Endothelial cell of umbilical vein (primary cell): ENCODE measurements at regions of chr20 and their contacts with region 1.

Region 1: DNA sequence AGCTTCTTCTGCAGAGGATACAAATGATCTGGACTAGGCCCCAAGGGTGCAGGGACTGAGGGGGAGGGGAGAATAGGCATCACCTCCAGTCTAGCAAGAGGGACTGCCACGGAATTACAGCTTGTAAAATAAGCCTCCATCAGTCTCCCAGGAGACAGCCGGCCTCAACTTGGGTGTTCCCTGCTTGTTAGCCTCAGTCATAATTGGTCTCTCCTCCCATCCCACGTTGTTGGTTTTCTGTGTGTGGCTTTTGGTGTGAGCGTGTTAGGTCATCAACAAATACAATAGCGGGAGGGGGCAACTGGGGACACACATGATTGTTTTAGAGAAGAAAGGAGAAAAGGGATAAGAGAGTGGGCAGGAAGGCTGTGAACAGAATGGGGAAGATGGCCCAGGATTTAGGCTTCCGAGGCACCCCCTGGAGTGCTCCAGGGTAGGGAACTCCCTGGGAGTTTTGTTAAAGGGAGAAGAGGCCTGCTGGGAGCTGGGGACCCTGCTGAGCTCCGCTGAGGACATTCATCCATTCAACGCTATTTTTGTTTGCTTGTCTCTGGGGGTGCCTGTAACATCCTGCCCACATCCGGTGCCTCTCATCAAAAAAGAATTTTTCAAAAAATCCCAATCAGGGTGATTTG is 9.2 kb downstream of the FOXA2 start:
- DNase-seq: no peak
- H3K4me3 ChIP-seq: no peak overlapping the region
- H3K27ac ChIP-seq: no peak overlapping the region
- H3K4me1 ChIP-seq: no peaks in the 10 kb centered on the region
- H3K27me3 ChIP-seq: peaks cover 90 to 96% of the 10 kb centered on the region in 2 experiments
- CTCF ChIP-seq: no peak
- POLR2A ChIP-seq: no peak

Region 2: DNA sequence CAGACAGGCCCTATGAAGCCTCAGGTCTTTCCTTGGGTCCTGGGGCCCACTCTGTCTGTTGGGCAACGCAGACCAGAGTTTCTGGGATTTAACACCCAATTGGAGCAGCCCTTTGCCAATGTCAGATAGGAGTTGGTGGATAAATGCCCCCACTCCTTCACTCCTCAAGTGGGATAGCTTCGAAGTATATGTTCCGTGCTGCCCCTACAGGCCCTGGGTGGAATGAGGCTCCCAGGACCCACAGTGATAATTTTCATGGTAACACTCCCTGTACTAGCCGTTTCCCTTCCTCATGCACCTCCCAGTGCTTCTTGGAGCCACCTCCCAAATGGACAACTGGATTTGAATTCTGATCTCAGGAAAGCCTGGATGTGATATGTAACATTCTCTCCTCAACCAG is 136.3 kb before region 1 on chr20:
- CTCF ChIA-PET with region 1: no interaction called
- POLR2A ChIA-PET with region 1: no interaction called
- dilution Hi-C with region 1: no loop called
- intact Hi-C with region 1: no loop called
- DNase-seq: no peak
- H3K4me3 ChIP-seq: no peak overlapping the region
- H3K27ac ChIP-seq: no peak overlapping the region
- H3K4me1 ChIP-seq: no peaks in the 10 kb centered on the region
- H3K27me3 ChIP-seq: peaks cover 0 to 2% of the 10 kb centered on the region in 2 experiments
- CTCF ChIP-seq: no peak
- POLR2A ChIP-seq: no peak

Region 3: GRCh38 chr20:22499515-22500166 is 75.6 kb before region 1 on chr20:
- CTCF ChIA-PET with region 1: no interaction called
- POLR2A ChIA-PET with region 1: no interaction called
- dilution Hi-C with region 1: no loop called
- intact Hi-C with region 1: no loop called
- DNase-seq: no peak
- H3K4me3 ChIP-seq: no peak overlapping the region
- H3K27ac ChIP-seq: no peak overlapping the region
- H3K4me1 ChIP-seq: no peaks in the 10 kb centered on the region
- H3K27me3 ChIP-seq: no peaks in the 10 kb centered on the region
- CTCF ChIP-seq: no peak
- POLR2A ChIP-seq: no peak

Region 4: DNA sequence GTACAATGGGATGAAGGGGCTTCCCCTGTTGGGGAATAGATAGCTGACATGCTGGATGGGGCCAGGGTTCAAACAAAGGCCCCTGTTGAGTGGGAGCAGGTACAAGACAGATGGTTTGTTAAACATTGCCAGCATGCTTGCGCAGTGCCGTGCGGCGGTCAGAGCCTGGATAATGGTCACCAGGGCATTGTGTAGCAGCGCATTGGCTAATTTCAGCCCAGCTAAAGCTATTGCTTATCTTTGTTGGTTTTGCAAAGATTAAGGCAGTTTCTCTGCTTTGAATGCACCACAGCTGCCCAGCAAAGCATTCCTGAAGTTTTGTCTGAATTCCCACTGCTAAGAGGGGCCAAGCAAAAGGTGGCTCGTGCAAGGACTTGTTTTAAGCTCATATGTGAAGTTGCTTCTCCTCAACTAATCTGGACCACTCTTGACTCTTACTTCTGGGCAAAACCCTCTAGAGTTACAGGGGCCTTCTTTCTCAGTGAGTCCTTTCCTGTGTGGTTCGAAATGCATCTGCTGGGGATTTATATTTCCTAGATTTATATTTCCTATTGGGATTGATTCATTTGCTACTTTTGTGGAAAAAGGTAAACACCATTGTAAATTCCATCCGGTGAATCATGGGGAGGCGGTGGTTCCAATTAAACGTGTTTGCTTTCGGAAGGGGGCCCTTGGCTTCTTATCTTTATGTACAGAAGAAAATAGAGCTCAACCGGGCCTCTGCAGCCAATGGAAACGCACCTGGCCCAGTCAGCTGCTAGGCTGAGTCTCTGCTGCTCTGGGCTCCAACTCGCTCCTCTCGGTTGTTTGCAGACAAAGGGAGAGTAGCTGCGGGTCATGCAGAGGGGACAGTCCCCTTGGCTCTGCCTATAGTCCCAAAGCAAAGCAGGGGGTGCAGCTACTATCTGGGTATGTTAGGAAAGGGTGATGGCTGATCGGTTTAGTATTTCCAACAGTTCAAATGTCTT is 63.0 kb before region 1 on chr20:
- CTCF ChIA-PET with region 1: no interaction called
- POLR2A ChIA-PET with region 1: no interaction called
- dilution Hi-C with region 1: no loop called
- intact Hi-C with region 1: loop called (anchors 5 kb)
- DNase-seq: peak; percentile 85
- H3K4me3 ChIP-seq: no peak overlapping the region
- H3K27ac ChIP-seq: no peak overlapping the region
- H3K4me1 ChIP-seq: peaks cover 13% of the 10 kb centered on the region
- H3K27me3 ChIP-seq: peaks cover 4 to 5% of the 10 kb centered on the region in 2 experiments
- CTCF ChIP-seq: no peak
- POLR2A ChIP-seq: no peak